ENCODE measurements at regions of chr20 and their contacts with region 1.

Region 1: GRCh38 chr20:2172305-2173175 is 70.9 kb downstream of the STK35 start:
- DNase-seq: peak; percentile 54
- H3K4me3 ChIP-seq: no peak overlapping the region
- H3K27ac ChIP-seq: no peak overlapping the region
- H3K4me1 ChIP-seq: no peaks in the 10 kb centered on the region
- H3K27me3 ChIP-seq: peaks cover 0 to 8% of the 10 kb centered on the region in 2 experiments
- CTCF ChIP-seq: peak; percentile 88 to 90
- POLR2A ChIP-seq: no peak

Region 2: DNA sequence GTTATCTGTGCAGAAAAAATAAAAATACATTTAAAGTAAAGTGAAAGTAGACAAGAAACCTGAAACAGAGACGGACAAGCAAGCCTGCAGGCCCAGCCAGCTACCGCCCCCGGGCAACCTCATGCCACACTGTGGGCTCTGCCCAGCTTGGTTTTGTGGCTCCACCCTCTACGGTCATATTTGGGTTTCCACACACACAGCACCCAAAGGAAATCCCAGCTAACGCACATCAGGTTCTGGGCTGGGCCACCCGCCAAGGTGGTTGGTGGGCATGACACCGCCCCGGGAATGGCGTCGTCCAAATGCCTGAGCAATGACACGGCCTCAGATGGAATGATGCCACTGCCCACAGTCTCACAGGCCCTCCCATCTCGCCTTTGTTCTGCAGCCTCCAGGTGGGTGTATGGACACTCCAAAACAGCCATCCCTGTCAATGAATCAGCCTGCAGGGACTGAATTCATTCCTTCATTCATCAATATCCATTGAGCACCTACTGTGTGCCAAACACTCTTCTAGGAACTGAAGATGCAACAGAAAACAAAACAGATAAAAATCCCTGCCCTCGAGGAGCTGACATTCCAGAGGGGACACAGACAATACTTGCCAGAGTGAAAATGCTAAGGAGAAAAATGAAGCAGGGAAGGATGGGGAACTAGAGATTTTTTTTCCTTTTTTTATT is 1316.0 kb before region 1 on chr20:
- CTCF ChIA-PET with region 1: no interaction called
- POLR2A ChIA-PET with region 1: no interaction called
- dilution Hi-C with region 1: no loop called
- intact Hi-C with region 1: no loop called
- DNase-seq: no peak
- H3K4me3 ChIP-seq: no peak overlapping the region
- H3K27ac ChIP-seq: no peak overlapping the region
- H3K4me1 ChIP-seq: no peaks in the 10 kb centered on the region
- H3K27me3 ChIP-seq: no peaks in the 10 kb centered on the region
- CTCF ChIP-seq: no peak
- POLR2A ChIP-seq: no peak

Region 3: DNA sequence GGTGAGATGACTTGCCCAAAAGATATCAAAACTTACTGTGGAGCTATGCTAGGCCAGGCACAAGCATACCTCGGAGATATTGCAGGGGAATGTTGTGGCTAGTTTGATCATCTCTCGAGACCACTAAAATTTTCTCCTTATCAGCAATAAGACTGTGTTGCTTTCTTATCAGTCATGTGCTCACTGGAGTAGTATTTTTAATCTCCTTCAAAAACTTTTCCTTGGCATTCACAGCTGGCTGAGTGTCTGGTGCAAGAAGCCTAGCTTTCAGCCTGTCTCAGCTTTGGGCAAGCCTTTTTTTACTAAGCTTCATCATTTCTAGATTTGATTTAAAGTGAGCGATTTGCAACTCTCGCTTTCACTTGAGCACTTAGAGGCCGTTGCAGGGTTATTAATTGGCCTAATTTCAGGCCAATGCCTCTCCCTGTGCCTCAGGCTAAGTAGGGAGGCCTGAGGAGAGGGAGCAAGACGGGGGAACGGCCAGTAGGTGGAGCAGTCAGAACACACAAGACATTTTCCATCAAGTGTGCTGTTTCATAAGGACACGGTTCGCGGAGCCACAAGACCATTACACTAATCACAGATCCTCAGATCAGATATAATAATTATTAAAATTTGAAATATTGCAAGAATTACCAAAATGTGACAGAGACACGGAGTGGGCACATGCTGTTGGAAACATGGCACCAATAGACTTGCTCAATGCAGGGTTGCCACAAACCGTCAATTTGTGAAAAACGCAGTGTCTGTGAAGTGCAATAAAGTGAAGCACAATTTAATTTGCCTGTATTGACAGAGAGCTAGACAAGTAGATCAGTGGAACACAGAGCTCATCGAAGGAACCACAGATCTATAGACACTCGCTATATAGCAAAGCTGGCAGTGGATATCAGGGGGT is 408.2 kb before region 1 on chr20:
- CTCF ChIA-PET with region 1: interaction called, 35 read pairs
- POLR2A ChIA-PET with region 1: no interaction called
- dilution Hi-C with region 1: no loop called
- intact Hi-C with region 1: loop called (anchors 2 kb)
- DNase-seq: peak; percentile 76
- H3K4me3 ChIP-seq: no peak overlapping the region
- H3K27ac ChIP-seq: no peak overlapping the region
- H3K4me1 ChIP-seq: peaks cover 3% of the 10 kb centered on the region
- H3K27me3 ChIP-seq: no peaks in the 10 kb centered on the region
- CTCF ChIP-seq: peak; percentile 84 to 86
- POLR2A ChIP-seq: no peak

Region 4: DNA sequence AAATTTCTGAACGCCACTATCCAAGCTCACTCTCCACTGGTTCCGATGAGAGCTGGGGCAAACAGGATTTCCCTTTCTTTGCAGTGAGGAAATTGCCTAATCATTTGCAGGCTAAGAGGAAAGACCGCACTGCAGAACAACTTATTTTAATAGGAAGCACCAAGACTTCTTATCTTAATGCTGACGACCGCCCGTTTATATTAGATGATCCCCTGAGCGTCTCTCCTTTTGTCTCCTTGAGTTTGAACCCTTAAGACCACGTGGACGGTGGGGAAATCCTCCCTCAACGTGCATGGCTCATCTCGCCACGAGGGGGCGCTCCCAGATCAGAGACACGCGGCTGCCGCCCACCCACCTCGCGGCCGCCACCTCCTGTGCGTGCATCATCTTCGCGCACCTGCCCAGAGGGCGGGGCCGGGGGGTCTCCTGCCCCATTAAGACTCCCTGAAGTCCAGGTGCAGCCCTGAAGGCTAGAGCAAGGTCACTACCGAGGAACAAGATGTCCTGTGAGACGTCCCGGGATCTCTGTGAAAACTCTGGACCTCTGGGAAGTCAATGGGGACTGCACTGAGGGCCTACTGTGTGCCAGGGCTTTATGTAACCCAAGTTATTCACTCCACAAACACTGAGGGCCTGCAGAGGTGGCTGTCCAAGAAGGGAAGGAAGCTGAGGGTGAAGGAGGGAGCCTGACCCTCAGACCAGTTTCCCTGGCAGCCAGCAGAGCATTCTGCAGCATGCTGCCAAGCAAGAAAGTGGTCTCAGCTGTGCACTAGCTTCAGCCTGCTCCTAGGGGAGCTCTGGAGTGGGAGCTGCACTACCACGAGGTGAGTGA is 206.8 kb before region 1 on chr20:
- CTCF ChIA-PET with region 1: interaction called, 118 read pairs
- POLR2A ChIA-PET with region 1: no interaction called
- dilution Hi-C with region 1: no loop called
- intact Hi-C with region 1: loop called (anchors 1 kb)
- DNase-seq: peak; percentile 63
- H3K4me3 ChIP-seq: peak overlapping the region in 1 of 3 experiments; percentile 30
- H3K27ac ChIP-seq: no peak overlapping the region
- H3K4me1 ChIP-seq: peaks cover 4% of the 10 kb centered on the region
- H3K27me3 ChIP-seq: peaks cover 15 to 18% of the 10 kb centered on the region in 2 experiments
- CTCF ChIP-seq: peak; percentile 92 to 94
- POLR2A ChIP-seq: no peak

Region 5: GRCh38 chr20:2005831-2006426 is 166.6 kb before region 1 on chr20:
- CTCF ChIA-PET with region 1: interaction called, 159 read pairs
- POLR2A ChIA-PET with region 1: no interaction called
- dilution Hi-C with region 1: no loop called
- intact Hi-C with region 1: loop called (anchors 1 kb)
- DNase-seq: peak; percentile 46
- H3K4me3 ChIP-seq: no peak overlapping the region
- H3K27ac ChIP-seq: no peak overlapping the region
- H3K4me1 ChIP-seq: no peaks in the 10 kb centered on the region
- H3K27me3 ChIP-seq: peaks cover 0 to 4% of the 10 kb centered on the region in 2 experiments
- CTCF ChIP-seq: peak in 1 of 2 donors; percentile 3
- POLR2A ChIP-seq: no peak

Region 6: DNA sequence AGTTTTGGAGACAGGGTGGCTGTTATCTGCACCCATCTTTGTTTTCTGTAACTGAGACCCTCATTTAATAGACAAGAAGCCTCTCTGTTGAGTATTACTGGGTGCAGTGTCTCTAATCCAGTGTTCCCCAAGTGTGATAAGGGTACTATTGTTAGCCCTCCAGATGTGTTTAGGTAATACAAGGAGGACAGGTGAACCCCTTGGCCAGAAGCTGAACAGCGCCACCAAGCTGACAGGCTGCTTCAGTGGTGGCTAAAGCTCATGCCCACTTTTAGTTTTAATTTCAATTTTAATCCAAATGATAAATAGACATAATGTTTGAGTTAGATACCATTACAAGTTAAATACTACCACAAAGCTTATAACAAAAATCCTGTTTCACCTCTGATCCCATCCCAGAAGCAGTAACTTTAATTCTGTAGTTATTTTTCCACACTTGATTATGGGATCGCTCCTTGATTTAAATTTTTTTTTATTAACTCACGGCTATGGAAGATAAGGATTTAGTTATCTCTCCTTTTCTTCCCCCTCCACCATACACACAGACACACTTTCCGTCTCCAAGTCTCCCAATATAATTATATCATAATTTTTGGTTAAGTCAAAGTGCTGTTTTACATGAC is 79.3 kb before region 1 on chr20:
- CTCF ChIA-PET with region 1: interaction called, 12 read pairs
- POLR2A ChIA-PET with region 1: no interaction called
- dilution Hi-C with region 1: no loop called
- intact Hi-C with region 1: no loop called
- DNase-seq: no peak
- H3K4me3 ChIP-seq: no peak overlapping the region
- H3K27ac ChIP-seq: no peak overlapping the region
- H3K4me1 ChIP-seq: no peaks in the 10 kb centered on the region
- H3K27me3 ChIP-seq: peaks cover 11 to 17% of the 10 kb centered on the region in 2 experiments
- CTCF ChIP-seq: peak; percentile 28 to 30
- POLR2A ChIP-seq: no peak

Region 7: DNA sequence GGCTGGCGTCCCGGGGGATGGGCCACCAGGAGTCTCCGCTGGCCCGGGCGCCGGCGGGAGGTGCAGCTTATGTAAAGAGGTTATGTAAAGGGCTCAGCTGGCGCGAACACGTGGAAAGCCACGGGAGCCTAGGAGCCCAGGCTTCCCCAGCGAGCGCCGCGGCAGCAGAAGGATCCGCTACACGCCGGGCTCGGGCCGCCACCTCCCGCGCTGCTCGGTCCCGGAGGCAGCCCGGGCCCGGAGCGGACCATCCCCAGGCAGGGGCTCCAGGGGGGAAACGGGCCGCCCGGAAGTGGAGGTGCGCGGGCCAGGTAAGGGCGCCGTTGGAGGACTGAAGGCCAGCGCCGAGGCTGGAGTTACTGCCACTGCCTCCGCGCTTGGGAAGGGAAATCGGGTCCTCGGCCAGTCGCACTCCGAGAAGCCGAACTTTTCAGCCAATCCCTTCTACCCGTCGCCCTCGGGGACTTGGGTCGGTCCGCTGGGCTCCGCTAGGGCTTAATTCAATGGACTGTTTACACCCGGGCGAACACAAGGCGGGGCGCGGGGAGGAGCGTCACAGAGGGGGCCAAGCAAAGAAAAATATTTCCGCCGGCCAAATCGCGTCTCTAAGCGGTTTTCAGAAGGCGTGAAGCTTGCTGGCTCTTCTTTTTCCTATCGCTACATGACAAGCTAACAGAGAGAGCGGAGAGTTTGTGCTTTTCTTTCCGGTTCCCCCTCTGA is 70.5 kb before region 1 on chr20:
- CTCF ChIA-PET with region 1: interaction called, 14 read pairs
- POLR2A ChIA-PET with region 1: interaction called, 4 read pairs
- dilution Hi-C with region 1: no loop called
- intact Hi-C with region 1: loop called (anchors 5 kb)
- DNase-seq: peak; percentile 90
- H3K4me3 ChIP-seq: peak overlapping the region; percentile 49 to 77 (median 65)
- H3K27ac ChIP-seq: peak overlapping the region; percentile 98
- H3K4me1 ChIP-seq: peaks cover 16% of the 10 kb centered on the region
- H3K27me3 ChIP-seq: peaks cover 0 to 2% of the 10 kb centered on the region in 2 experiments
- CTCF ChIP-seq: no peak
- POLR2A ChIP-seq: peak; percentile 75

Region 8: DNA sequence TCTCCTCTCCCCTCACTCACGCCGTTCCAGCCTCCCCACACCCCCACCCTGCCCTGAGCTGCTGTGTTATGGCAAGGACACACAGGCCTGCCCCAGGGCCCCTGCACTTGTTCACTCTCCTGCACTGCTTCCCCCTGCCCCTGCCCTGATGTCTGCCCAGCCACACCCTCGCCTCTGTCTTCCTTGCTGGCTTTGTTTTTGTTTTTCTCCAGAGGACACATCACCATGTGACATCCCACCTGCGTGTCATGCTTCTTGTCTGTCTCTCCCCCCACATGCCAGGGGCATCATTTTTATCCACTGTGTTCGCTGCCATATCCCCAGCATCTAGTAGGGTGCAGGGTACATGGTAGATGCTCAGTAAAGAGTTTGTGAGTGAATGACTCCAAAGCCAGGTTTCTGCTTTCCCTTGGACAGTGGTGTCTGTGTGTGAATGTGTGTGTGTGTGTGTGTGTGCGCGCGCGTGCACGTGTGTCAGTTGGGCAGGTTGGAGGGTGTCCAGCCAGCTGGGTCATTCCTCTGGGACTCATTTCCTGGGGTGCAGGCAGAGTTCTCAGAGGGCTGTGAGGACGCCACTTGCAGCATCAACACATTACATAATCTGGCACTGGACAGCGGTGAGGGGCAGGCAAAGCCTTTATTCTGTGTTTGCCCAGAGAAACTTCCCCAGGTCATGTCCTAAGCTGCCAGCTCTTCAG is 10.3 kb before region 1 on chr20:
- CTCF ChIA-PET with region 1: interaction called, 18 read pairs
- POLR2A ChIA-PET with region 1: no interaction called
- dilution Hi-C with region 1: no loop called
- intact Hi-C with region 1: no loop called
- DNase-seq: no peak
- H3K4me3 ChIP-seq: no peak overlapping the region
- H3K27ac ChIP-seq: no peak overlapping the region
- H3K4me1 ChIP-seq: no peaks in the 10 kb centered on the region
- H3K27me3 ChIP-seq: no peaks in the 10 kb centered on the region
- CTCF ChIP-seq: no peak
- POLR2A ChIP-seq: no peak

Region 9: GRCh38 chr20:3407771-3408637 is 1235.5 kb after region 1 on chr20:
- CTCF ChIA-PET with region 1: no interaction called
- POLR2A ChIA-PET with region 1: no interaction called
- dilution Hi-C with region 1: no loop called
- intact Hi-C with region 1: no loop called
- DNase-seq: peak; percentile 78
- H3K4me3 ChIP-seq: peak overlapping the region; percentile 78 to 89 (median 84)
- H3K27ac ChIP-seq: peak overlapping the region; percentile 20
- H3K4me1 ChIP-seq: peaks cover 27% of the 10 kb centered on the region
- H3K27me3 ChIP-seq: peaks cover 0 to 7% of the 10 kb centered on the region in 2 experiments
- CTCF ChIP-seq: no peak
- POLR2A ChIP-seq: peak; percentile 73